Heart right ventricle (tissue), 16 donors: ENCODE measurements at regions of chr6 and their contacts with region 1.

Region 1: DNA sequence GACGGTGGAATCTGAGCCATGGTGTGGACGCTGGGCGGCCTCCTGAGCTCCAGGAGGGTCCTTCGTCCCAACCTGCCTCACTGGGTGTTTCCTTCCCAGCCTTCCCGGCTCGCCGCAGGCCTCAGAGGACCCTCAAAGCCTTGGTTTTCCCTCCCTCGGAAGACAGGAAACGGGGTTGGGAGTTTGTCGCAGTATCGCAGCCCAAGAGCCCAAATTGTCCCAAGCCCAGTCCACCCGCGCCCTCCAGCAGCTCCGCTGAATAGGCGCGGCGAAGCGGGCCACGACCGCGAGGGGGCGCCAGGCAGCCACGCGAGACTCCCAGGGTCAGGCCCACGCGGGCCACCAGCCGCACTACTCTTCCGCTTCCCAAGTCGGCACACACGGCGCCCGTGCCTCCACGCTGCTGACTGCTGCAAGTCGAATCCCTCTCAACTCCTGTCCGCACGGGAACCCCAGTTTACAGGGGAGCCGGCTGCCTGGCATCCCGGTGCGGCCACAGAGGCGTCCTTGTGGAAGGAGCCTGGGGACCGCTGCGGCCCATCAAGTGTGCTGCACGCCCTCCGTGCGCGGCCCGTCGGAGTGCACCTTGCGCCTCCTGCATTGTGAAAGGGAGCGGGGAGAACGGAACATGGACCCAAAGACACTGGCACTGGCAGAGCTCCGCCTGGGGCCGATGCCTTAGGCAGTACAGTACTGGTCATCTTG is 40.4 kb upstream of the HMGA1 start:
- DNase-seq: peak; percentile 85 to 92
- ATAC-seq: peak; percentile 98 to 99 (median 99)
- H3K4me3 ChIP-seq: peak overlapping the region in 9 of 10 donors; percentile 41 to 72 (median 56)
- H3K27ac ChIP-seq: peak overlapping the region in 1 of 10 donors; percentile 26
- H3K4me1 ChIP-seq: peaks cover 0 to 10% (median 5%) of the 10 kb centered on the region in 9 donors
- H3K27me3 ChIP-seq: peaks cover 0 to 4% (median 0%) of the 10 kb centered on the region in 7 donors
- CTCF ChIP-seq: peak; percentile 95 to 99 (median 98)

Region 2: GRCh38 chr6:34236131-34236996 is 40.1 kb after region 1 on chr6 and contains the start of gene HMGA1:
- intact Hi-C with region 1: loop called in 3 of 10 experiments (anchors 5 kb)
- DNase-seq: peak; percentile 88 to 89
- ATAC-seq: peak; percentile 90 to 95 (median 94)
- H3K4me3 ChIP-seq: peak within 1 kb of the TSS; percentile 71 to 85 (median 78)
- H3K27ac ChIP-seq: peak within 1 kb of the TSS in 9 of 10 donors; percentile 76 to 94 (median 85)
- H3K4me1 ChIP-seq: peaks cover 6 to 26% (median 14%) of the 10 kb centered on the region in 9 donors
- H3K27me3 ChIP-seq: no peaks in the 10 kb centered on the region
- CTCF ChIP-seq: no peak
- total RNA-seq, gene HMGA1: 33.9 to 54.9 (median 41.3) TPM

Region 3: GRCh38 chr6:34414999-34415858 is 219.0 kb after region 1 on chr6:
- intact Hi-C with region 1: loop called (anchors 1 to 5 kb)
- DNase-seq: peak in 1 of 2 donors; percentile 75
- ATAC-seq: peak; percentile 80 to 95 (median 92)
- H3K4me3 ChIP-seq: no peak overlapping the region
- H3K27ac ChIP-seq: peak overlapping the region in 9 of 10 donors; percentile 13 to 70 (median 54)
- H3K4me1 ChIP-seq: peaks cover 0 to 18% (median 9%) of the 10 kb centered on the region in 9 donors
- H3K27me3 ChIP-seq: no peaks in the 10 kb centered on the region
- CTCF ChIP-seq: peak; percentile 61 to 89 (median 76)

Region 4: GRCh38 chr6:34973547-34974248 is 777.4 kb after region 1 on chr6:
- intact Hi-C with region 1: loop called in 1 of 10 experiments (anchors 10 kb)
- DNase-seq: no peak
- ATAC-seq: no peak
- H3K4me3 ChIP-seq: no peak overlapping the region
- H3K27ac ChIP-seq: no peak overlapping the region
- H3K4me1 ChIP-seq: no peaks in the 10 kb centered on the region
- H3K27me3 ChIP-seq: no peaks in the 10 kb centered on the region
- CTCF ChIP-seq: peak in 5 of 9 donors; percentile 22 to 34 (median 24)